Activated CD4-positive, alpha-beta T cell treated with anti-CD3 and anti-CD28 coated beads, Interleukin-2, amount 10 ng/mL, durations not matched to agents 24 days and 14 days (primary cell): ENCODE measurements at regions of chr2 and their contacts with region 1.

Region 1: GRCh38 chr2:73071360-73072133 is at the start of gene SFXN5:
- DNase-seq: peak; percentile 99
- H3K4me3 Mint-ChIP-seq: peak within 1 kb of the TSS; percentile 89
- H3K27ac Mint-ChIP-seq: peak within 1 kb of the TSS; percentile 92
- H3K4me1 Mint-ChIP-seq: peaks cover 20% of the 10 kb centered on the region
- H3K27me3 Mint-ChIP-seq: peaks cover 12% of the 10 kb centered on the region
- total RNA-seq, gene SFXN5: 11.6 and 14.1 TPM in 2 replicates

Region 2: DNA sequence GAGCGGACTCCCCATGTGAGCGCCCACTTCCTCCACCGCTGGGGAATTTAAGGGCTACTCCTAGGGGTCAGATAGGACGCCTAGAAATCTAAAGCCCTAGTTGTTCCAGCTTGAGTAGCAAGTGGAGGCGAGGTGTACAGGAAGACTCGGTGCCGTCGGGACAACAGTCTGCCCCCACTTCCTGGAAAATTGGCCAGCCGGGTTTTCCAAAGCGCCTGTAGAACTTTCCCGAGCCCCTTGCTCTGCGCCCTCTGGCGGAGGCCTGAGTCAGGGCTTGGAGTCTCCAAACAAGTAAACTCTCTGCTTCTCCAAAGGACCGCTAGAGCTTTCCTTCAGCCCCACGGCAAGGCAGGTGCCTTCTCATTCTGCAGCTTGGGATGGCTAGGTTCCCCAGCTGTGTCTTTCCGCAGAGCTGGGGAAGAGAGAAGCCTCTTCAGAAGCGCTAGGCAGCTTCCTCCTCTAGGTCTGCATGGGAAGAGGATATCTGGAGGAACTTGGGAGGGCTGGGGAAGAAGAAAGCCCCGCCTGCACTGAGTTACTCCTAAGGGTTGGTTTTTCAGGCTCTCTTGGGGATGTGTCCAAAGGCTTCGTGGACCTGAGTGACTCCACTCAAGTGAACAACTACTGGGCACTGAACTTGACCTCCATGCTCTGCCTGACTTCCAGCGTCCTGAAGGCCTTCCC is 183.7 kb before region 1 on chr2:
- intact Hi-C with region 1: loop called (anchors 2 kb)
- DNase-seq: peak; percentile 85
- H3K4me3 Mint-ChIP-seq: peak overlapping the region; percentile 81
- H3K27ac Mint-ChIP-seq: no peak overlapping the region
- H3K4me1 Mint-ChIP-seq: peaks cover 4% of the 10 kb centered on the region
- H3K27me3 Mint-ChIP-seq: peaks cover 34% of the 10 kb centered on the region

Region 3: DNA sequence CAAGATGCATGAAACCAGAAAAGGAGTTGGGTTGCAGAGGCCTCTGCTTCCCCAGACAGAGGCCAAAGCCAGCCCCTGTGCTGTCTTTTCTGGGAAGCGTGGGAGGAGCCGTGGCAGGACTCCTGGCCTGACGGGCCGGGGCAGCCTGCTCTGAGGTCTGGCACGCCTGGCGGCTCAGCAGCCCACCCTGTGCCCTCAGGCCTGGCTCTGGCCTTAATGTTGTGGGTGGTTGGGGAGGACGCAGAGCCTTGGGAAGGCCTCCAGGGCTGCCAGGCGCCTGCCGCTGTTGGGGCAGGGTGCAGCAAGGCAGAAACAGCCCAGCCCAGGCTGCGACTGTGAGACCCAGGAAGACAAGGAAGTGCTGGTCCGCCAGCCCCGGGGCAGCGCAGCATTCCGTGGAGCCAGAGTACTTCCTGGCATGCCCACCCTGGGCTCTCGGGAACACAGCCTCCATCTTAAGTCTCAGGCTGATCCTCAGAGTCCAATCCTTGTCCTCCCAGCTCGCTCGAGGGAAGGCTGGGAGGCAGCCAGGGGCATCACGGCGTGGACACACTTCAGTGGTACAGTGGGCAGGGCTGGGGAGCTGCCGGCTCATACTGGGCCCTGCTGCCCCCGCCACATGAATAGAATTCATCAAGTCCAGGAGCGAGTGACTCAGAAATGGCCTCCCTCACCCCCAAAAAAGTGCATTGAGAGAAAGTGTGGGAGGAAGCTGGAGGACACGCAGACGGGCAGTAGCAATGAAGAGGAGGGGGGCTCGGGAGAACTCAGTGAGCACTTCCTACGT is 81.6 kb before region 1 on chr2:
- intact Hi-C with region 1: no loop called
- DNase-seq: no peak
- H3K4me3 Mint-ChIP-seq: no peak overlapping the region
- H3K27ac Mint-ChIP-seq: no peak overlapping the region
- H3K4me1 Mint-ChIP-seq: no peaks in the 10 kb centered on the region
- H3K27me3 Mint-ChIP-seq: no peaks in the 10 kb centered on the region

Region 4: GRCh38 chr2:72999729-73000725 is 71.5 kb before region 1 on chr2:
- intact Hi-C with region 1: no loop called
- DNase-seq: no peak
- H3K4me3 Mint-ChIP-seq: no peak overlapping the region
- H3K27ac Mint-ChIP-seq: no peak overlapping the region
- H3K4me1 Mint-ChIP-seq: no peaks in the 10 kb centered on the region
- H3K27me3 Mint-ChIP-seq: no peaks in the 10 kb centered on the region

Region 5: GRCh38 chr2:73176881-73177644 is 105.5 kb after region 1 on chr2:
- intact Hi-C with region 1: loop called (anchors 5 kb)
- DNase-seq: peak; percentile 96
- H3K4me3 Mint-ChIP-seq: peak overlapping the region; percentile 88
- H3K27ac Mint-ChIP-seq: peak overlapping the region; percentile 43
- H3K4me1 Mint-ChIP-seq: peaks cover 22% of the 10 kb centered on the region
- H3K27me3 Mint-ChIP-seq: peaks cover 64% of the 10 kb centered on the region

Region 6: GRCh38 chr2:73385595-73386341 is 314.2 kb after region 1 on chr2 and contains the start of gene ALMS1:
- intact Hi-C with region 1: loop called (anchors 1 kb)
- DNase-seq: peak; percentile 97
- H3K4me3 Mint-ChIP-seq: peak within 1 kb of the TSS; percentile 92
- H3K27ac Mint-ChIP-seq: peak within 1 kb of the TSS; percentile 93
- H3K4me1 Mint-ChIP-seq: peaks cover 23% of the 10 kb centered on the region
- H3K27me3 Mint-ChIP-seq: peaks cover 8% of the 10 kb centered on the region
- total RNA-seq, gene ALMS1: 19.6 and 21.9 TPM in 2 replicates